B cell (primary cell): ENCODE measurements at regions of chr7 and their contacts with region 1.

Region 1: DNA sequence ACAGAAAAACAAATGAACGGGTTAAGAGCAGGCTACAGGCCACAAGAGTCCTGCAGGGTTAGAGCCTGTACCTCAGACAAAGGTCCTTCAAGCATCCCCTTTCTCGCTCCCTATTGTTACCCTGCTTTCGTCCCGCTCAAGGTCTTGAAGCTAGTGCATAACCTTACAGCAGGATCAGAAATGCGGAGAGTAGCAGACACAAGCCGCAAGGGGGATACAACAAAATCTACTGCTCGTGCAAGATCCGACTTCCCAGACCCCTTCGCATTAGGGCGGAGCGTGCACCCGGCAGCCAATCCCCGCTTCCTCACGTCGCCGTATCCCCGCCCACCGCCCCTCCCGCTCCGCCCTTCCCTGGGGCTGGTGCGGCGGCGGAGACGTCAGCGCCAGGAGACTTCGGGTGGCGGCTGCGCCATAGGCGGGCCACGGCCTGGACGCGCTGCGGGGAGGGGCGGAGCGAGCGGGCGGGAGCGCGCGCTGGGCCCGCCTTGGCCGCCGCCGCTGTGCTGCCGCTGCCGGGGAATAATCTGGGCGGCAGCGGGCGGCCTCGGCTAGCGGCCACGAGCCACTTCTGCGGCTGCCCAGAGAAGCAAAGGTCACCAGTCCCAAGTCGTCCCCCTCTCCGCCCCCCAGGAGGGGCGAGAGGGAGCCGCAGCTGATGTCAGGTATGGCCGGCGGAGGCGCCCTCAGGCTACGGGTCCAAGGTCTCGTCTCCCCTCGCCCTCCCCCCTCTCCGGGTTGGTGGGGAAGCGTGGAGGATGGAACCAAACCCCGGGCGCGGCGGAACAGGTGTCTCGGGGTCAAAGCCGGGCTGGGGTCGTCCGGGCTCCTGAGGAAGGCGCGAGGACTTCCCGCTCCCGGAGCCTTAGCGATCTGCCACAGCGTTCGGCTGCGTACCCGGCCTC is at the start of gene C1GALT1:
- DNase-seq: peak; percentile 99
- ATAC-seq: peak; percentile 79
- H3K4me3 ChIP-seq: peak within 1 kb of the TSS; percentile 85 to 97 (median 91)
- H3K4me3 Mint-ChIP-seq: peak within 1 kb of the TSS; percentile 97
- H3K27ac ChIP-seq: peak within 1 kb of the TSS; percentile 89 to 93
- H3K27ac Mint-ChIP-seq: peak within 1 kb of the TSS; percentile 98
- H3K4me1 ChIP-seq: peaks cover 29 to 41% of the 10 kb centered on the region in 2 donors
- H3K4me1 Mint-ChIP-seq: peaks cover 30% of the 10 kb centered on the region
- H3K27me3 ChIP-seq: no peaks in the 10 kb centered on the region
- H3K27me3 Mint-ChIP-seq: no peaks in the 10 kb centered on the region
- CTCF ChIP-seq: peak; percentile 64
- total RNA-seq, gene C1GALT1: 59.8 and 66.8 TPM in 2 replicates

Region 2: GRCh38 chr7:7157177-7157886 is 25.1 kb before region 1 on chr7:
- CTCF ChIA-PET with region 1: interaction called, 21 read pairs
- POLR2A ChIA-PET with region 1: interaction called, 13 read pairs
- intact Hi-C with region 1: loop called (anchors 1 kb)
- DNase-seq: peak; percentile 68
- ATAC-seq: peak; percentile 91
- H3K4me3 ChIP-seq: peak overlapping the region; percentile 49 to 90 (median 61)
- H3K4me3 Mint-ChIP-seq: peak overlapping the region; percentile 90
- H3K27ac ChIP-seq: peak overlapping the region; percentile 64 to 80
- H3K27ac Mint-ChIP-seq: peak overlapping the region; percentile 94
- H3K4me1 ChIP-seq: peaks cover 33 to 34% of the 10 kb centered on the region in 2 donors
- H3K4me1 Mint-ChIP-seq: peaks cover 57% of the 10 kb centered on the region
- H3K27me3 ChIP-seq: no peaks in the 10 kb centered on the region
- H3K27me3 Mint-ChIP-seq: no peaks in the 10 kb centered on the region
- CTCF ChIP-seq: no peak

Region 3: GRCh38 chr7:7251742-7252141 is 69.3 kb after region 1 on chr7:
- CTCF ChIA-PET with region 1: interaction called, 4 read pairs
- POLR2A ChIA-PET with region 1: interaction called, 3 read pairs
- intact Hi-C with region 1: loop called (anchors 2 kb)
- DNase-seq: peak; percentile 88
- ATAC-seq: peak; percentile 99
- H3K4me3 ChIP-seq: peak overlapping the region in 2 of 5 experiments; percentile 7 to 43
- H3K4me3 Mint-ChIP-seq: peak overlapping the region; percentile 73
- H3K27ac ChIP-seq: peak overlapping the region; percentile 74 to 75
- H3K27ac Mint-ChIP-seq: peak overlapping the region; percentile 96
- H3K4me1 ChIP-seq: peaks cover 37 to 78% of the 10 kb centered on the region in 2 donors
- H3K4me1 Mint-ChIP-seq: peaks cover 76% of the 10 kb centered on the region
- H3K27me3 ChIP-seq: no peaks in the 10 kb centered on the region
- H3K27me3 Mint-ChIP-seq: no peaks in the 10 kb centered on the region
- CTCF ChIP-seq: no peak

Region 4: DNA sequence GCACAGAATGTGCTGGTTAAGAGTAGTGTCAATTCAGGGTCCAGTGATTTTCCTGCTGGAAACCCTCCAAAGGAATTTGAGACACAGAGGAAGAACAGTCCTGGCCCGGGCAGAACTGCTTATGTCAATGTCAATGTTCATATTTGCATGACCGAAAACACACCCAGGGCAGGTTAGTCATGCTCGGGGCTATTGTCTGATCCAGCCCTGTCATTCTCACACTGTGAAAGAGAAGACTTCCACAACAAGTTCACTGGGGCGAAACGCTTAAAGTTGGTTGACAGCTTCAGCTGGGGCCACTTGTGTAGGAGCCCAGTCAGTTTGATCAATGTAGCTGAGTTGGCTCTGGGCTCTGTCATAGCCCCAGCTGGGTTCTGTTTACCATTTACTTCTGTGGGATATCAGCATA is 139.3 kb after region 1 on chr7:
- CTCF ChIA-PET with region 1: interaction called, 8 read pairs
- POLR2A ChIA-PET with region 1: no interaction called
- intact Hi-C with region 1: loop called (anchors 5 kb)
- DNase-seq: peak; percentile 59
- ATAC-seq: peak; percentile 92
- H3K4me3 ChIP-seq: no peak overlapping the region
- H3K4me3 Mint-ChIP-seq: no peak overlapping the region
- H3K27ac ChIP-seq: no peak overlapping the region
- H3K27ac Mint-ChIP-seq: peak overlapping the region; percentile 10
- H3K4me1 ChIP-seq: peaks cover 24 to 27% of the 10 kb centered on the region in 2 donors
- H3K4me1 Mint-ChIP-seq: peaks cover 30% of the 10 kb centered on the region
- H3K27me3 ChIP-seq: no peaks in the 10 kb centered on the region
- H3K27me3 Mint-ChIP-seq: no peaks in the 10 kb centered on the region
- CTCF ChIP-seq: no peak

Region 5: GRCh38 chr7:7542251-7542835 is 359.9 kb after region 1 on chr7:
- CTCF ChIA-PET with region 1: interaction called, 11 read pairs
- POLR2A ChIA-PET with region 1: no interaction called
- intact Hi-C with region 1: loop called (anchors 2 kb)
- DNase-seq: no peak
- ATAC-seq: no peak
- H3K4me3 ChIP-seq: no peak overlapping the region
- H3K4me3 Mint-ChIP-seq: no peak overlapping the region
- H3K27ac ChIP-seq: no peak overlapping the region
- H3K27ac Mint-ChIP-seq: no peak overlapping the region
- H3K4me1 ChIP-seq: no peaks in the 10 kb centered on the region
- H3K4me1 Mint-ChIP-seq: no peaks in the 10 kb centered on the region
- H3K27me3 ChIP-seq: no peaks in the 10 kb centered on the region
- H3K27me3 Mint-ChIP-seq: no peaks in the 10 kb centered on the region
- CTCF ChIP-seq: no peak

Region 6: GRCh38 chr7:7640221-7641128 is 458.1 kb after region 1 on chr7 and contains the start of gene UMAD1:
- CTCF ChIA-PET with region 1: no interaction called
- POLR2A ChIA-PET with region 1: interaction called, 5 read pairs
- intact Hi-C with region 1: loop called (anchors 1 kb)
- DNase-seq: peak; percentile 99
- ATAC-seq: peak; percentile 91
- H3K4me3 ChIP-seq: peak within 1 kb of the TSS; percentile 83 to 99 (median 93)
- H3K4me3 Mint-ChIP-seq: peak within 1 kb of the TSS; percentile 87
- H3K27ac ChIP-seq: peak within 1 kb of the TSS; percentile 98 to 99
- H3K27ac Mint-ChIP-seq: peak within 1 kb of the TSS; percentile 98
- H3K4me1 ChIP-seq: peaks cover 15 to 17% of the 10 kb centered on the region in 2 donors
- H3K4me1 Mint-ChIP-seq: peaks cover 45% of the 10 kb centered on the region
- H3K27me3 ChIP-seq: no peaks in the 10 kb centered on the region
- H3K27me3 Mint-ChIP-seq: no peaks in the 10 kb centered on the region
- CTCF ChIP-seq: no peak
- total RNA-seq, gene UMAD1: 25.9 and 27.3 TPM in 2 replicates